GM10248 (cell line): ENCODE measurements at regions of chr4 and their contacts with region 1.

Region 1: DNA sequence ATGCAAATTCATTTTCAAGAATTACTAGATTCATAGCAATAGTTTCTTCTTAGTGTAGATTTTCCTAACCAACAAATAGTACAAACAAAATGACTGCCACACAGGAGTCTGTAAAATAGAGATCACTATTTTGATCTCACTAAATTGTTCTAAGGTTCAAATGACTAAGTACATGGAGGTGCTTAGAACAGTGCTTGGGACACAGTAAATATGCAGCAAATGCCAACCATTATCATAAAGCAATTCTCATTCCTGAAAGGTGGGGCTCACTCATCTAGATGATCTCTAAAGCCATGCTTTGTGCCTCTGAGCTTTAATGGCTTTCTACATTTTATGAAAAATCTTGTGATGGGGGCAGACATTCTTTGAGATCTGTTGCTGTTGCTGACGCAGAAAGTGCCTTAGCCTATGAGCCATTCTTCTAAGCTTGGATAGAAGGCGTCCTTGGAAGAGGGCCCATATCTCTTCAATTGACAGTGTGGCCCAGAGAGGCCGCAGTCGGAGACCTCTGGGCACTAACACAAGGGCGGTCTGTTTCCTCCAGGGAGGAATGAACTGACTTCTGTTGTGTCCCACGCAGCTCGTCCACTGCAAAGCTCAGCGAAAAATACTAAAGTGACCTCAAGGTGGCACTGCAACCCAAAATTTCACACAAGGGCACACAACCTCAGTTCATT is 23.5 kb downstream of the TLR10 start:
- DNase-seq: peak; percentile 45
- CTCF ChIP-seq: peak; percentile 62

Region 2: GRCh38 chr4:38654273-38654672 is 105.0 kb before region 1 on chr4:
- CTCF ChIA-PET with region 1: no interaction called
- POLR2A ChIA-PET with region 1: no interaction called
- DNase-seq: no peak
- CTCF ChIP-seq: no peak

Region 3: DNA sequence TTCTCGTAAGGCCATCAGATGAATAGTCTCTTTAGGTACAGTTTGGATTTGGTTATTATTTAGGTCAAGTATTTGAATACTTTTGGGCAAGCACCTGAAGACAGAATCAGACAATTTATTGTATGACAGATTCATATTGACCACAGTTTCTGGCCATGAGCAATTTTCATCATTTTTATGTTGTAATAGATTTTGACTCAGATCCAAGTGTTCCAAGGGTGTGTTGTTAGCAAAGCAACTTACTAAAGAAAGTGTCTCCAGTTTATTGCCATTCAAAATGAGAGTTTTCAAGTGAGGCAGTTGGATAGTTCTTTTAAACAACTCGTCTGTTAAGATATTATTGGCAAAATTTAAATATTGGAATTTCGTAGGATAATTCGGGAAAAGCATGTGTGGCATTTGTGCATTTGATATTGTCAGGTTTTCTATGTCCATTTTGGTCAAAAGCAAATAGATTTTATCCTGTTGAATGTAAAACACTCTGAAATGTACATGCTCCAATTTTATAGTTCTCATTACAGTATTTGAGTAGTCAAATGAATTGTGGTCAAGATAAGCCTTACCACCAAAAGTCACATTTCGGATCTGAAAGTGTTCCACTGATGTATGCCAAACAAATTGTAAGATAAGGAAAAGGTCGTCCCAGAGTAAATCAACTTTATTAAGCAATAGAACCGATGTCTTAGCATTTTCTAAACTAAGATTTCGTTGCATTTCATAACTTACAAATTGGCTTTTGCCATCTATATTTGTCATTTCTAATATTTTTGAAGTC is 15.1 kb after region 1 on chr4:
- CTCF ChIA-PET with region 1: interaction called, 248 read pairs
- POLR2A ChIA-PET with region 1: interaction called, 4 read pairs
- DNase-seq: no peak
- CTCF ChIP-seq: no peak

Region 4: GRCh38 chr4:38795087-38795486 is 35.8 kb after region 1 on chr4:
- CTCF ChIA-PET with region 1: interaction called, 128 read pairs
- POLR2A ChIA-PET with region 1: interaction called, 4 read pairs
- DNase-seq: no peak
- CTCF ChIP-seq: no peak

Region 5: DNA sequence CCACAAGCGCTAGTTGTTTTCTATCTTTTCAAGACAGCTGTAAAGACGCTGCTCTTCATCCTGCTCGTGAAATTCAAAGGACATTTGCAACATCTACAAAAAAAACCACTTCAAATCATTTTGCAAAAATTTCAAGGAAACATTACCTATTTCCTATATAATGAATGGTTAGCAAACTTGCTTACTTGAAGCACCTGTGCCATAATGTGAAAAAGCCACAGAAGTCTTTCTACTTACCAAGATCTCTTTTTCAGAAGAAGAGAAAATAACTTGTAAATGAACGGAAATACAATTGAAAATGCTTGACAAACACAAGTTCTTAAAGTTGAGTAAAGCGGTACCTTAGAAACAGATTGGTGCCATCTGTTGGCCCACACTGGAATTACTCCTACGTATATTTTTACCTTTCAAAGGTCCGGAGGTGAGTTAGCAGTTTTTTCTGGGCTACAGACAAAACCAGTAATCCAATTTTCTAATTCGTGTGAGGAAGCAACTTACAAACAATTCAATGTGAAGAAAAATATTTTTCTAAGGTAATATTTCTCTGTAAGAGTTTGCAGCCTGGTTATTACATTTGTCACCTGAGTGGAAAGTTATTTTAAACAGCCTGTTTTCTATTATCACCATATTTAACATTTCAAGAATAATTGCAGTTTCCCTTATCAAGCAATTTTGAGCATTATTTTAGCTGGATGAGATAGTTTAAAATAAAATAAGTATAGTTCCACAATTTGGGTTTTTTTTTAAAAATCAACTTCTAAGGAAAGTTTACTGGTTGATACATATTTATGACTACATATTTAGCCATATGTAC is 97.5 kb after region 1 on chr4 and contains the start of gene TLR6:
- CTCF ChIA-PET with region 1: interaction called, 101 read pairs
- POLR2A ChIA-PET with region 1: interaction called, 3 read pairs
- DNase-seq: peak; percentile 47
- CTCF ChIP-seq: peak; percentile 52

Region 6: DNA sequence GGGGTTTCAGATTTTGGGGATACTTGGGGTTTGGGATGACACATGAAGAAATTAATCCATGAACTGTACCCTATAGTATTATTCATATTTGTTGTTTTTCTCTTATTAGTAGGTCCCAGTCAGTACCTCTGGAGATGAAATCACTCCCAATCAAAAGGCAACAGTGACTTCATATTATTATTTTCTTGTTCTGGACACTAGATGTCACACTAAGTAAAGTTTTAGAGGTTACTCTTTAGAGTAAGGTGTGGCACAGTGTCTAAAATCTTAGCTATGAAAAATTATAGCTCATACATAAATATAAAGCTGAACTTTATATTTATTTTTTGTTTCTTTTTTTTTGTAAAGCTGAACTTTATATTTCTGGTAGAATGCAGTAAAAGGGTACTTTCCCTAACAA is 143.4 kb after region 1 on chr4:
- CTCF ChIA-PET with region 1: interaction called, 12 read pairs
- POLR2A ChIA-PET with region 1: no interaction called
- DNase-seq: peak; percentile 56
- CTCF ChIP-seq: peak; percentile 40